ENCODE measurements at regions of chr16 and their contacts with region 1.

Region 1: DNA sequence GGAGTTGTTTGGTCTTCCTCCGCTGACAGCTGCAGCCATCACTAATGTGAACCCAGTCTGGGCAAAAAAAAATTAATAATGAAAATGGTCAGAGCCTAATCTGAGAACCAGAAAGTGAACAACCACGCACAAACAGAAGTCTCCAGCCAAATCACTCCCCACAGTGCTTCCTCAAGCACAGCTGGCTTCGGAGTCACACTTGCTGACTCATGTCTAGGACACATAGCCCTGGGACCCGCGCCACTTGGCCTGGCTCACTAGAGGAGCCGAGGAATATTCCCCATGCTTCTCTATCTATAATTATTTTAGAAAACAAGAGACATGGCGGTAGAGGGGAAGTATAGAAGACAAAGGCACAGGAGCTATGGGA is 109.1 kb downstream of the ZFHX3 start:
- DNase-seq: peak; percentile 88
- ATAC-seq: peak; percentile 94 to 96

Region 2: GRCh38 chr16:72705801-72706200 is 233.0 kb before region 1 on chr16:
- intact Hi-C with region 1: no loop called
- DNase-seq: no peak
- ATAC-seq: no peak

Region 3: DNA sequence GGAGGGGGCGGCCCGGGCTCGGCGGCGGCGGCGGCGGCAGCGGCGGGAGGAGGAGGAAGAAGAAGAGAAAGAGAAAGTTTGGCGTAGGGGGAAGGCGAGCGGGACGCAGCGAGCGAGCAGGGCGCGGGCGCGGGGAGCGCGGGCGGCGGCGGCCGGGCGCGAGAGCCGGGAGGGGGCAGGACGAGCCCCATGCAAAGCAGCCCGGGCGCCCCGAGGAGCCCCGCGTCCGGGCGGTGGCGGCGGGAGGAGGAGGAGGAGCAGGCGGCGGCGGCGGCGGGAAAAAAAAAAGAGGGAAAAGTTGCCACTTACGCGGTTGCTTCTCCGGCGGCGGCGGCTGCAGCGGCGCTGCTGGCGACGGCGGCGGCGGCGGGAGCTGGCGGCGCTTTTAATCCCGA is 119.4 kb after region 1 on chr16:
- intact Hi-C with region 1: loop called in 1 of 2 experiments (anchors 5 kb)
- DNase-seq: peak; percentile 51
- ATAC-seq: peak; percentile 35 to 60

Measured in left cardiac atrium (tissue), 4 donors.